Caco-2 (cell line): ENCODE measurements at regions of chr11 and their contacts with region 1.

Region 1: DNA sequence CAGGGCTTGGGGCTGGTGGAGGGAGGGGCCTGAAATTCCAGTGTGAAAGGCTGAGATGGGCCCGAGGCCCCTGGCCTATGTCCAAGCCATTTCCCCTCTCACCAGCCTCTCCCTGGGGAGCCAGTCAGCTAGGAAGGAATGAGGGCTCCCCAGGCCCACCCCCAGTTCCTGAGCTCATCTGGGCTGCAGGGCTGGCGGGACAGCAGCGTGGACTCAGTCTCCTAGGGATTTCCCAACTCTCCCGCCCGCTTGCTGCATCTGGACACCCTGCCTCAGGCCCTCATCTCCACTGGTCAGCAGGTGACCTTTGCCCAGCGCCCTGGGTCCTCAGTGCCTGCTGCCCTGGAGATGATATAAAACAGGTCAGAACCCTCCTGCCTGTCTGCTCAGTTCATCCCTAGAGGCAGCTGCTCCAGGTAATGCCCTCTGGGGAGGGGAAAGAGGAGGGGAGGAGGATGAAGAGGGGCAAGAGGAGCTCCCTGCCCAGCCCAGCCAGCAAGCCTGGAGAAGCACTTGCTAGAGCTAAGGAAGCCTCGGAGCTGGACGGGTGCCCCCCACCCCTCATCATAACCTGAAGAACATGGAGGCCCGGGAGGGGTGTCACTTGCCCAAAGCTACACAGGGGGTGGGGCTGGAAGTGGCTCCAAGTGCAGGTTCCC is at the start of gene APOC3:
- DNase-seq: peak; percentile 93 to 96
- H3K4me3 ChIP-seq: peak within 1 kb of the TSS; percentile 3; the same call in 1 of the 2 replicates
- H3K4me3 Mint-ChIP-seq: peak within 1 kb of the TSS; percentile 50
- H3K27ac Mint-ChIP-seq: peak within 1 kb of the TSS; percentile 89
- H3K4me1 ChIP-seq: peaks cover 84% of the 10 kb centered on the region
- H3K4me1 Mint-ChIP-seq: peaks cover 49% of the 10 kb centered on the region
- H3K27me3 ChIP-seq: no peaks in the 10 kb centered on the region
- H3K27me3 Mint-ChIP-seq: no peaks in the 10 kb centered on the region
- CTCF ChIP-seq: no peak
- total RNA-seq, gene APOC3: 103 and 128 TPM in 2 replicates

Region 2: GRCh38 chr11:116567721-116568242 is 261.9 kb before region 1 on chr11:
- CTCF ChIA-PET with region 1: no interaction called
- POLR2A ChIA-PET with region 1: no interaction called
- intact Hi-C with region 1: no loop called
- DNase-seq: no peak
- H3K4me3 ChIP-seq: no peak overlapping the region
- H3K4me3 Mint-ChIP-seq: no peak overlapping the region
- H3K27ac Mint-ChIP-seq: no peak overlapping the region
- H3K4me1 ChIP-seq: peaks cover 13% of the 10 kb centered on the region
- H3K4me1 Mint-ChIP-seq: peaks cover 10% of the 10 kb centered on the region
- H3K27me3 ChIP-seq: no peaks in the 10 kb centered on the region
- H3K27me3 Mint-ChIP-seq: no peaks in the 10 kb centered on the region
- CTCF ChIP-seq: no peak

Region 3: GRCh38 chr11:116787786-116788486 is 41.7 kb before region 1 on chr11 and contains the start of gene ZPR1:
- CTCF ChIA-PET with region 1: interaction called, 52 read pairs
- POLR2A ChIA-PET with region 1: interaction called, 18 read pairs
- intact Hi-C with region 1: loop called (anchors 1 kb)
- DNase-seq: peak; percentile 84 to 90
- H3K4me3 ChIP-seq: peak within 1 kb of the TSS; percentile 80
- H3K4me3 Mint-ChIP-seq: peak within 1 kb of the TSS; percentile 80
- H3K27ac Mint-ChIP-seq: peak within 1 kb of the TSS; percentile 94
- H3K4me1 ChIP-seq: peaks cover 46% of the 10 kb centered on the region
- H3K4me1 Mint-ChIP-seq: peaks cover 42% of the 10 kb centered on the region
- H3K27me3 ChIP-seq: no peaks in the 10 kb centered on the region
- H3K27me3 Mint-ChIP-seq: no peaks in the 10 kb centered on the region
- CTCF ChIP-seq: no peak
- total RNA-seq, gene ZPR1: 168 and 194 TPM in 2 replicates

Region 4: GRCh38 chr11:116842909-116843308 is 13.3 kb after region 1 on chr11:
- CTCF ChIA-PET with region 1: interaction called, 15 read pairs
- POLR2A ChIA-PET with region 1: interaction called, 11 read pairs
- intact Hi-C with region 1: loop called (anchors 2 kb)
- DNase-seq: peak; percentile 79 to 95
- H3K4me3 ChIP-seq: no peak overlapping the region
- H3K4me3 Mint-ChIP-seq: peak overlapping the region; percentile 50
- H3K27ac Mint-ChIP-seq: peak overlapping the region; percentile 93
- H3K4me1 ChIP-seq: peaks cover 61% of the 10 kb centered on the region
- H3K4me1 Mint-ChIP-seq: peaks cover 45% of the 10 kb centered on the region
- H3K27me3 ChIP-seq: no peaks in the 10 kb centered on the region
- H3K27me3 Mint-ChIP-seq: no peaks in the 10 kb centered on the region
- CTCF ChIP-seq: no peak

Region 5: GRCh38 chr11:116861539-116861938 is 31.9 kb after region 1 on chr11:
- CTCF ChIA-PET with region 1: no interaction called
- POLR2A ChIA-PET with region 1: no interaction called
- intact Hi-C with region 1: no loop called
- DNase-seq: no peak
- H3K4me3 ChIP-seq: no peak overlapping the region
- H3K4me3 Mint-ChIP-seq: no peak overlapping the region
- H3K27ac Mint-ChIP-seq: no peak overlapping the region
- H3K4me1 ChIP-seq: peaks cover 10% of the 10 kb centered on the region; the same call in 1 of the 2 replicates
- H3K4me1 Mint-ChIP-seq: peaks cover 6% of the 10 kb centered on the region
- H3K27me3 ChIP-seq: no peaks in the 10 kb centered on the region
- H3K27me3 Mint-ChIP-seq: no peaks in the 10 kb centered on the region
- CTCF ChIP-seq: no peak

Region 6: GRCh38 chr11:116879800-116880625 is 50.4 kb after region 1 on chr11:
- CTCF ChIA-PET with region 1: no interaction called
- POLR2A ChIA-PET with region 1: interaction called, 3 read pairs
- intact Hi-C with region 1: loop called (anchors 2 kb)
- DNase-seq: peak in 1 of 2 experiments; percentile 64
- H3K4me3 ChIP-seq: no peak overlapping the region
- H3K4me3 Mint-ChIP-seq: no peak overlapping the region
- H3K27ac Mint-ChIP-seq: no peak overlapping the region
- H3K4me1 ChIP-seq: peaks cover 23% of the 10 kb centered on the region
- H3K4me1 Mint-ChIP-seq: peaks cover 40% of the 10 kb centered on the region
- H3K27me3 ChIP-seq: no peaks in the 10 kb centered on the region
- H3K27me3 Mint-ChIP-seq: no peaks in the 10 kb centered on the region
- CTCF ChIP-seq: peak; percentile 71 to 96